GM13976 (cell line): ENCODE measurements at regions of chr3 and their contacts with region 1.

Region 1: GRCh38 chr3:150703299-150704134 is at the start of gene ERICH6:
- DNase-seq: peak; percentile 94
- CTCF ChIP-seq: no peak

Region 2: DNA sequence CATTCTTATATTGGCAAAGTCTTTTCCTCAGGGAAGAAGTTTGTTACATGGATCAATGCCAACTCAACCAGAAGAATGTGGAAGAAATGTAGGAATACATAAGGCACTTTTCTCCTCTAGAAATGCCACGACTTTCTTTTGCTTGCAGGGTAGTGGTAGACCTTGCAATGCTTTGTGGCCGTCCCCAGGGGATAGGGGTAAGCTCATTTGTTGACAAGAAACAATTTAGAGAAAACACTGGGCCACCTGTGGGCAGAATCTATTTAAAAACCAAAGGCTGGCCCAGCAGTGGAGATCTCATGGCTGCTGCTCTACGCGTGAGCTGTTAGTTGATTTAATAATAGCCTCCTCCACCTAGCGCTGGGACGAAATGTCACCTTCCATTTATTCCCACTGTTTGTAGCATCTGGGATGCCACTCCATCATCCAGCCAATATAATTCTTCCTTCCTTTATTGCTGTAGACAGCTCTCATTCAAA is 668.2 kb before region 1 on chr3:
- in situ Hi-C with region 1: no loop called
- DNase-seq: no peak
- CTCF ChIP-seq: no peak

Region 3: DNA sequence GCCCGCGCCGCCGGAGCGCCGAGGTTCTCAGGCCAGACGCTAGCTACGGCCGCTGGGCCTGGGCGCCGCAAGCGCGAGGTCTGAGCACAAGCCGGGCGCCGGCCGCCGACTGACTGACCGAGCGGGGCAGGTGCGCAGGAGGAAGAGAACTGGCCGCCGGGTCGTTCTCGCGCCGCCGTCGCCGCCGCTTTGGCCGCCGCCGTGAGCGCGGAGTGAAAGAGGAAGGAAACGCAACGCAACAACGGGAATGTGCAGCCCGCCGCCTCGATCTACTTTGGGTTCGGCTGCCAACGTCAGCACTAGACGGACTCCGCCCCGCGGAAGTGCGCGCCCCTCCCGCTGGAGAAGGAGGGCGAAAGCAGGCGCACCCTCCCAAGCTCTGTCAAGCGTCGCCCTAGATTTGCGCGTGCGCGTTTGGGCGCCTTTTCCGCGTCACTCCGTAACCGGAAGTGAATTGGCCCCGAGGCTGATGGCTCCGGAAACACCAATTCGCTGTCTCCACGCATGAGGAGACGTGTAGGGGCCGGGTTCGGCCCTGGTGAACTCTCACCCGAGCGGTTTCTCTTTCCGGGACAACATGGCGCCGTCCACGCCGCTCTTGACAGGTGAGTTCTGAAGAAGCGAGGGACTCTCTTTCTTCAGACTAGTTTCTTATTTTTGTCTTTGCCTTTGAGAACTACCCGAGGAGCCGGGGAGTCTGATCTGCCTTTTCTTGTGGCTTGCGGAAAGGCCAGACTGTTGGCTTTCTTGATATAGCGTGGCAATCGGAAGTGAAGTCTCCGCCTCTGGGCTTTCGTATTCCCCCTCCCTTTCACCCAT is 157.1 kb before region 1 on chr3 and contains the starts of genes EIF2A and SERP1:
- in situ Hi-C with region 1: loop called (anchors 25 kb)
- DNase-seq: peak; percentile 95
- CTCF ChIP-seq: no peak